ENCODE measurements at regions of chr1 and their contacts with region 1.

Region 1: DNA sequence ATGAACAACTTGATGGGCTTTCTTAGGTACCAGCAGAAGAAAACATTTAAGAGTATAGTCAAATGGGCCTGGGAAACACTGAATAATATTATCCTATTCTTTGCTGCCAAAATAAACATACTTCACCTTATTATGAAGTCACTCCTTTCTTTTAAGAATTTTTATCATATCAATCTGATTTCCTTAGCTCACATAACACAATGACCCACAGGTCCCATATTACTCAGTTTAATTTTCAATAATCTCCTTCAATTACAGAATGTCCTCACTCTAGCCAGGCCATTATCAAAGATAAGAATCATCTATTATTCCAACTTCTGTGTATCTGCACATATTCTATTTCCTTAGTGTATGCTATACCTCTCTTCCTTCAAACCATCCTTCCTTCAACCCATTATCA is 63.0 kb downstream of the PIGK start:
- DNase-seq: no peak
- H3K4me3 ChIP-seq: no peak overlapping the region
- H3K27ac ChIP-seq: no peak overlapping the region
- H3K4me1 ChIP-seq: no peaks in the 10 kb centered on the region
- H3K27me3 ChIP-seq: no peaks in the 10 kb centered on the region
- CTCF ChIP-seq: no peak
- POLR2A ChIP-seq: no peak

Region 2: GRCh38 chr1:77010937-77011336 is 145.3 kb before region 1 on chr1:
- intact Hi-C with region 1: no loop called
- DNase-seq: no peak
- H3K4me3 ChIP-seq: no peak overlapping the region
- H3K27ac ChIP-seq: no peak overlapping the region
- H3K4me1 ChIP-seq: no peaks in the 10 kb centered on the region
- H3K27me3 ChIP-seq: no peaks in the 10 kb centered on the region
- CTCF ChIP-seq: no peak
- POLR2A ChIP-seq: no peak

Region 3: GRCh38 chr1:77056525-77056924 is 99.7 kb before region 1 on chr1:
- intact Hi-C with region 1: no loop called
- DNase-seq: no peak
- H3K4me3 ChIP-seq: no peak overlapping the region
- H3K27ac ChIP-seq: no peak overlapping the region
- H3K4me1 ChIP-seq: no peaks in the 10 kb centered on the region
- H3K27me3 ChIP-seq: no peaks in the 10 kb centered on the region
- CTCF ChIP-seq: no peak
- POLR2A ChIP-seq: no peak

Region 4: GRCh38 chr1:77271852-77272580 is 115.8 kb after region 1 on chr1:
- intact Hi-C with region 1: no loop called
- DNase-seq: no peak
- H3K4me3 ChIP-seq: no peak overlapping the region
- H3K27ac ChIP-seq: no peak overlapping the region
- H3K4me1 ChIP-seq: no peaks in the 10 kb centered on the region
- H3K27me3 ChIP-seq: no peaks in the 10 kb centered on the region
- CTCF ChIP-seq: no peak
- POLR2A ChIP-seq: no peak

Region 5: DNA sequence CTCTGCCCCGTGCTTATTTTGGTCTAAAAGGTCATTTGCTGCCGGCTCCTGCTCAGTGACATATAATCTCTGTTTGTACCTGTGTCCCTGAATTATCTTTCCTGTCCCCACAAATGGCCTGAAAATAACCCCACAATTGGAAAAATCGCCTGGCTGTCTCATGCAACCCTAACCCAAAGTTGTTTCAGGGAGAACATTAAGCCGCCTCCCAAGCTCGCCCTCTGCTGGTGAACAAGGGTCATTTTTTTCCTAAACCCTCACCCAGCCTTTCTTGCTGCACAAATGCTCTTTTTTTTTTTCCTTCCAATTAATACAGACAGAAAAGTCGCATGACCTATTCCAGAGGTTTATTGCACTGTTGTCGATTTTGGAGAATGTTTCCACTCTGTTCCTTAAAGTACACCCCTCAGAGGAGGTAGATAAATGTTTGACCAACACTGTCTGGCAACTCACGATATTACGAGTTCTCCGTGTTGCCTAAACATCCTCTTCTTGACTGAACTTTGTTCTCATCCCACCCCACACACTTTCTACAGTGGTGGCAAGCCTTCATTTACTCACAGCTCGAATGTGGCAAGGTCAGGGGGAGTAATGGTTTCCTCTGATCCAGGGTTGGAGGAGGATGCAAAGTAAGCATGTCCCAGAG is 377.6 kb after region 1 on chr1:
- intact Hi-C with region 1: loop called (anchors 10 kb)
- DNase-seq: no peak
- H3K4me3 ChIP-seq: no peak overlapping the region
- H3K27ac ChIP-seq: no peak overlapping the region
- H3K4me1 ChIP-seq: no peaks in the 10 kb centered on the region
- H3K27me3 ChIP-seq: no peaks in the 10 kb centered on the region
- CTCF ChIP-seq: peak; percentile 56 to 83 (median 66)
- POLR2A ChIP-seq: no peak